MCF 10A (cell line): ENCODE measurements at regions of chr1 and their contacts with region 1.

Region 1: DNA sequence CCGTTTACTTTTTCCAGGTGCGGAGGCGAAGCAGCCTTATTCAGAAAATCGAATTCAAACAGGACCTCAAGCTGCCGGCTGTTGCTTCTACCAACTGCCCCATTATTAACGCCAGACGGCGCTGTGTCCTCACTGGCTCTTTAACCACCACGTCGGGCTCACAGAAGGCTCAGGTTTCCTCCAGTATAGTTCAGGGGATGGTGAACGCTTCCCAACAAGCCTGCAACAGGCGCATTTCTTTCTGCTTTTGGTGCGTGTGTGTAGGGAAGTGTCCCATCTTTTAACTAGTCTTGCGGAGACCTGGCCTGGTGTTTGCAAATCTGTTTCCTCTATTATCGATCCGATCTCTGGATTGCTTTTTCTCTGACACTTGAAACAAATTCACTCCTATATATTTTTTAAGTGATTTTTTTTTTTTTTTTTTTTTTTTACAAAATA is 791 bp upstream of the STUM start:
- DNase-seq: peak; percentile 98
- H3K4me3 Mint-ChIP-seq: no peak overlapping the region
- H3K27ac Mint-ChIP-seq: no peak overlapping the region
- H3K4me1 Mint-ChIP-seq: peaks cover 14% of the 10 kb centered on the region
- H3K27me3 Mint-ChIP-seq: peaks cover 51% of the 10 kb centered on the region
- CTCF ChIP-seq: peak; percentile 99

Region 2: GRCh38 chr1:226424228-226425003 is 123.4 kb before region 1 on chr1:
- CTCF ChIA-PET with region 1: interaction called, 26 read pairs
- POLR2A ChIA-PET with region 1: no interaction called
- intact Hi-C with region 1: loop called (anchors 1 kb)
- DNase-seq: peak; percentile 77
- H3K4me3 Mint-ChIP-seq: no peak overlapping the region
- H3K27ac Mint-ChIP-seq: no peak overlapping the region
- H3K4me1 Mint-ChIP-seq: no peaks in the 10 kb centered on the region
- H3K27me3 Mint-ChIP-seq: no peaks in the 10 kb centered on the region
- CTCF ChIP-seq: peak; percentile 88

Region 3: GRCh38 chr1:226532553-226532952 is 15.2 kb before region 1 on chr1:
- CTCF ChIA-PET with region 1: interaction called, 17 read pairs
- POLR2A ChIA-PET with region 1: interaction called, 5 read pairs
- intact Hi-C with region 1: no loop called
- DNase-seq: no peak
- H3K4me3 Mint-ChIP-seq: no peak overlapping the region
- H3K27ac Mint-ChIP-seq: no peak overlapping the region
- H3K4me1 Mint-ChIP-seq: no peaks in the 10 kb centered on the region
- H3K27me3 Mint-ChIP-seq: peaks cover 17% of the 10 kb centered on the region
- CTCF ChIP-seq: no peak

Region 4: GRCh38 chr1:226603022-226603857 is 55.5 kb after region 1 on chr1:
- CTCF ChIA-PET with region 1: interaction called, 23 read pairs
- POLR2A ChIA-PET with region 1: interaction called, 17 read pairs
- intact Hi-C with region 1: loop called (anchors 1 kb)
- DNase-seq: peak; percentile 91
- H3K4me3 Mint-ChIP-seq: peak overlapping the region; percentile 71
- H3K27ac Mint-ChIP-seq: peak overlapping the region; percentile 97
- H3K4me1 Mint-ChIP-seq: peaks cover 42% of the 10 kb centered on the region
- H3K27me3 Mint-ChIP-seq: peaks cover 8% of the 10 kb centered on the region
- CTCF ChIP-seq: no peak

Region 5: DNA sequence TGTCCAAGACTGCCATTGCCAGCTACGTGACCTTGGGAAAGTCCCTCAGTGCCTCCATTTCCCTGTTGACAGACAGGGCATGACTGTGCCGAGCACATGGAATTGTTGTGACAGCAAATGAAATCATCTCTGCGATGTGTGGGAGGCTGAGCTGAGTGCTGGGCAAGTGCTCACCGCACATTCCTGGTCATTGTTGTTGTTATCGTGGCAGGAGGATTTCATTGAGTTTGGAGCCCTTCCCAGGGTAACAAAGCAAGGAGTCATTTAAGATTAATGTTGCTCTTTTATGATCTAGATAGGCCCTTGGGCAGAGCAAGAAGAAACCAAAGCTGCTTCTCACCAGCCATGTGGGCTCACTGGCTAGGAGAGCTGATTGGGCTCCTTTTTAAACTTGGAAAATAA is 230.9 kb after region 1 on chr1:
- CTCF ChIA-PET with region 1: interaction called, 3 read pairs
- POLR2A ChIA-PET with region 1: no interaction called
- intact Hi-C with region 1: loop called (anchors 5 kb)
- DNase-seq: peak; percentile 99
- H3K4me3 Mint-ChIP-seq: no peak overlapping the region
- H3K27ac Mint-ChIP-seq: peak overlapping the region; percentile 65
- H3K4me1 Mint-ChIP-seq: peaks cover 16% of the 10 kb centered on the region
- H3K27me3 Mint-ChIP-seq: no peaks in the 10 kb centered on the region
- CTCF ChIP-seq: no peak

Region 6: DNA sequence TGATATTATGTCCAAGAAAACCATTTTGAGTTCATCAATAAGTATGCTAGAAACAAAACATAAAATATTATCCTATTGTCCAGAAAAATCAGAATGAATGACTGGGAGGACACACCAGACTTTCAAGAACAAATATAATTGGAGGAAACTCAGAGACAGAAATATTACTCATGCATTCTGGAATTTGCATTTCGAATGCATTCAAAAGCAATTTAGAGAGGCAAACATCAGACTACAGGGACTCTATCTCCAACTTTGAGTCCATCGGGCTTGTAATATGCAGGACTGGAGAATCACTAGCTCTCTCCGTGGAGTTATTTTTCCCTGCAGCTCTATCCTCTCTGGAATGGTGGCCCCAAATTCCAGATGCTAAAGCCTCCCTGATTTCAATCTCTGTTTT is 608.7 kb after region 1 on chr1:
- CTCF ChIA-PET with region 1: no interaction called
- POLR2A ChIA-PET with region 1: no interaction called
- intact Hi-C with region 1: no loop called
- DNase-seq: no peak
- H3K4me3 Mint-ChIP-seq: no peak overlapping the region
- H3K27ac Mint-ChIP-seq: no peak overlapping the region
- H3K4me1 Mint-ChIP-seq: peaks cover 5% of the 10 kb centered on the region
- H3K27me3 Mint-ChIP-seq: no peaks in the 10 kb centered on the region
- CTCF ChIP-seq: no peak

Region 7: DNA sequence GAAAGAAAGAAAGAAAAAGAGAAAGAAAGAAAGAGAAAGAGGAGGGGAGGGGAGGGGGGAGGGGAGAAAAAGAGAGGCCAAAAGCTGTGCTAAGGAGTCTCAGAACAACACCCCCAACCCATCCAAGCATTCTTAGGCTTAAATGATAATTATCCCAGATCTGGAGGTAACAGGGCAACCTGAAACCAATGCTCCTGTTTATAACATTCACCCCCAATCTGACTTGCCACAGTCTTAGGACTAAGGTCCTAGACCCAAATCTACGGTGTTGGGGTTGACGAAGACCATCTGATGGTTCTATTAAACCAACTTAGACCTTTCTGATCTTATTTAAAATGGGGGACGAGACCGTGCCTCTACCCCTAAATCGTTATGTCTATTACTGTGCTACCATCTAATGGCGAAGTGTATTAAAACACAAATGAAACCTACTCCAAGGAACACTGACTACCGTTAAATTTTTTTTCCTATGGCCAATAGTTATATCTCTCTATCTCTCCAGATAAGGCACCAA is 889.8 kb after region 1 on chr1:
- CTCF ChIA-PET with region 1: interaction called, 5 read pairs
- POLR2A ChIA-PET with region 1: no interaction called
- intact Hi-C with region 1: loop called (anchors 1 kb)
- DNase-seq: peak; percentile 83
- H3K4me3 Mint-ChIP-seq: peak overlapping the region; percentile 58
- H3K27ac Mint-ChIP-seq: peak overlapping the region; percentile 53
- H3K4me1 Mint-ChIP-seq: peaks cover 16% of the 10 kb centered on the region
- H3K27me3 Mint-ChIP-seq: no peaks in the 10 kb centered on the region
- CTCF ChIP-seq: peak; percentile 80